Ascending aorta (tissue), 2 donors: ENCODE measurements at regions of chr17 and their contacts with region 1.

Region 1: GRCh38 chr17:35154196-35155165 is 6.9 kb downstream of the UNC45B start:
- DNase-seq: no peak
- H3K4me3 ChIP-seq: no peak overlapping the region
- H3K27ac ChIP-seq: no peak overlapping the region
- H3K4me1 ChIP-seq: no peaks in the 10 kb centered on the region
- H3K27me3 ChIP-seq: no peaks in the 10 kb centered on the region
- CTCF ChIP-seq: no peak

Region 2: DNA sequence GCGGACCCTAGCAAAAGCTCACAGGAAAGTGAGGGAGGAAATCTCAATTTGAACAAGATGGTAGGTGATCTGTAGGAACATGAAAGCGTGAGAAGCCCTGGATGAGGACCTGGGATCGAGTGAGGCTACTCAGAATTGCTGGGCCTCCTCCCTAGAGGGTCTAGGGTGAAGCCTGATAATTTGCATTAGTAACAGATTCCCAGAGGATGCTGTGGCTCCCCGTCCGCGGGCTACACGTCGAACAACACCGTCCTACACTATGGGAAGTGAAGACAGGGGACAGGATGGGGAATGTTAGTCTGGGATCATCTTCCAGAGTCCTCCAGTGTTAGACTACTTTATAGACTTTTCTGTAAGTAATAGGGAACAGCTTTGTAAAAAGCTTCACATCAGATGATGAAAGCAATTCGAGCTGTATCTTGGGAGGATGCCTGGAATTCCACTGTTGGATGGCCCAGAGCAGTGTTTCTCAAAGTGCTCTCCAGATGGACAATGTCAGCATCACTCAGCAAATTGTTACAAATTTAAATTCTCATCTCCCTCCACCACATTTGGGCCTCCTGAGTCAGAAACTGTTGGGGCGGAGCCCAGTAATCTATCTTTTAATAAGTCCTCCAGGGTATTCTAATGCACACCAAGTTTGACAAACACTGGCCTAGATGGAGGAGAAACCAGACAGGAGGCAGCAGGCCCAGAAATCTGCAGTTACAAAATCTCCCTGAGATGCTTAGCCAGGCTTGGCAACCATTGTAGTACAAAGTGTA is 26.5 kb before region 1 on chr17:
- intact Hi-C with region 1: no loop called
- DNase-seq: no peak
- H3K4me3 ChIP-seq: no peak overlapping the region
- H3K27ac ChIP-seq: no peak overlapping the region
- H3K4me1 ChIP-seq: no peaks in the 10 kb centered on the region
- H3K27me3 ChIP-seq: no peaks in the 10 kb centered on the region
- CTCF ChIP-seq: no peak

Region 3: GRCh38 chr17:35214631-35215273 is 60.3 kb after region 1 on chr17:
- intact Hi-C with region 1: loop called (anchors 10 kb)
- DNase-seq: no peak
- H3K4me3 ChIP-seq: no peak overlapping the region
- H3K27ac ChIP-seq: no peak overlapping the region
- H3K4me1 ChIP-seq: no peaks in the 10 kb centered on the region
- H3K27me3 ChIP-seq: no peaks in the 10 kb centered on the region
- CTCF ChIP-seq: no peak